GM12878 (cell line): ENCODE measurements at regions of chr19 and their contacts with region 1.

Region 1: GRCh38 chr19:8444645-8445487 is at the start of gene HNRNPM:
- DNase-seq: peak; percentile 91
- ATAC-seq: peak; percentile 94
- H3K4me3 ChIP-seq: peak within 1 kb of the TSS; percentile 85
- H3K27ac ChIP-seq: peak within 1 kb of the TSS; percentile 85
- H3K4me1 ChIP-seq: peaks cover 8% of the 10 kb centered on the region
- H3K27me3 ChIP-seq: no peaks in the 10 kb centered on the region
- CTCF ChIP-seq: no peak
- EP300 ChIP-seq: no peak
- POLR2A ChIP-seq: peak; percentile 98
- RAD21 ChIP-seq: no peak
- polyA plus RNA-seq, gene HNRNPM: 14.3 to 35.9 TPM

Region 2: GRCh38 chr19:8412783-8413628 is 31.9 kb before region 1 on chr19 and contains the start of gene MARCHF2:
- CTCF ChIA-PET with region 1: interaction called, 11 read pairs
- POLR2A ChIA-PET with region 1: interaction called, 14 read pairs
- RAD21 ChIA-PET with region 1: interaction called, 14 read pairs
- SMC1A ChIA-PET with region 1: no interaction called
- in situ Hi-C with region 1: no loop called
- intact Hi-C with region 1: no loop called
- DNase-seq: peak; percentile 73
- ATAC-seq: peak; percentile 100
- H3K4me3 ChIP-seq: peak within 1 kb of the TSS; percentile 77
- H3K27ac ChIP-seq: no peak within 1 kb of the TSS; the same call in 1 of the 2 replicates
- H3K4me1 ChIP-seq: peaks cover 4% of the 10 kb centered on the region; the same call in 1 of the 2 replicates
- H3K27me3 ChIP-seq: no peaks in the 10 kb centered on the region
- CTCF ChIP-seq: peak; percentile 40 to 70 (median 66)
- EP300 ChIP-seq: no peak
- POLR2A ChIP-seq: peak; percentile 66
- RAD21 ChIP-seq: peak; percentile 60
- polyA plus RNA-seq, gene MARCHF2: 1.6 to 2.8 TPM

Region 3: DNA sequence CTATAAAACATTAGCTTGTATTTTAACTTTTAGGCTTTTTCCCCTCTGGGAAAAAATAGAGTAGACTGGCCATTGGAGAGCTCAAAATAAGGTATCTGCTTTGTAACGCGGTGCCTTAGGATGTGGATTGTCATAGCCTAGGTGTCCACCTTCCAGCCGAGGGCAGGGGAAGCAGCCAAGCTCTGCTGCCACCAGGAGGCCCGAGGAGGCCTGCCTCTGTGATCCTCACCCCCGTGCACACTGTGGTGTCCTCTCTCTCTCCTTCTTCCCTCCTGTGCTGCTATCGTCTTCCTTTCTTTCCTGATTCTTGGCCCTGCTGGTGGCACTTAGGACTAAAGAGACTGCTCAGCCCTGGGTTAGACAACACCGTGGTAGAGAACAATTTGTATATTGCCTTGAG is 11.2 kb after region 1 on chr19:
- CTCF ChIA-PET with region 1: interaction called, 10 read pairs
- POLR2A ChIA-PET with region 1: interaction called, 10 read pairs
- RAD21 ChIA-PET with region 1: no interaction called
- SMC1A ChIA-PET with region 1: interaction called, 7 read pairs
- in situ Hi-C with region 1: no loop called
- intact Hi-C with region 1: no loop called
- DNase-seq: no peak
- ATAC-seq: 0 out of 3 replicates have a peak, but pooled peaks have one; percentile 20
- H3K4me3 ChIP-seq: no peak overlapping the region
- H3K27ac ChIP-seq: no peak overlapping the region
- H3K4me1 ChIP-seq: peaks cover 13% of the 10 kb centered on the region
- H3K27me3 ChIP-seq: no peaks in the 10 kb centered on the region
- CTCF ChIP-seq: no peak
- EP300 ChIP-seq: no peak
- POLR2A ChIP-seq: no peak; the same call in 1 of the 2 replicates
- RAD21 ChIP-seq: no peak

Region 4: DNA sequence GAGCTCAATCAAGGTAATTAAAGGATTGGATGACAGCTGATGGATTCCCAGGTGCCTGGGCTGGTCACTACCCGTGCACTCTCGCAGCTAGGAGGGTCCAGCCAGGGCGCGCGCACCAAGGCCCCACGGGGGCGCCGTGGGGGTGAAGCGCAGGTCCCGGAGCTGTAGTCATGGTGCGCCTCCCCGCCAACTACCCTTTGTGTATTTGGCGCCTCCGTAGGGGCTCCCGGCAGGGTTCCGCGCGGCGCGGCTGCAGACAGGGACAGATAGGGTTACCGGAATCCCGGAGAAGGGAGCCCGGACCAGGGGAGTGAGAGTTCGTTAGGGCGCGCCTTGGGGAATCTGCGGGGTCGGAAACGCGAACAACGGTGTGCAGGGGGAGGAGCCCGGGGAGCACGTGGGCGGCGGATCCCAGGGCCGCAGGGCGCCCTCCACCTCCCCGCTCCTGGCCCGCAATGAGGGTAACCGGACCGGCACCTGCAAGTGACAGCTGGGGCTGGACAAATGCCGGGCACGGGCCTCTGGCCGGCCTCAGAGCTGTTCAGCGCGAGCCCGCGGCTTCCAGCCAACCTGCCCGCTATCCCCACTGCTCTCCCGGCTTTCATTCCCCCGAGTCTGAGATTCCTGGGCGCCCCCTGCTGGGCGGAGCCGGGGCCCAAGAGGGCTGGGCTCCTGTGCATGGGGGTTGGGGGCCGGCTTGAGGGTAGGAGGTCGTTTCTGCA is 61.0 kb after region 1 on chr19:
- CTCF ChIA-PET with region 1: interaction called, 17 read pairs
- POLR2A ChIA-PET with region 1: interaction called, 3 read pairs
- RAD21 ChIA-PET with region 1: interaction called, 5 read pairs
- SMC1A ChIA-PET with region 1: interaction called, 3 read pairs
- in situ Hi-C with region 1: no loop called
- intact Hi-C with region 1: no loop called
- DNase-seq: no peak
- ATAC-seq: peak; percentile 83
- H3K4me3 ChIP-seq: peak overlapping the region; percentile 69
- H3K27ac ChIP-seq: peak overlapping the region; percentile 33; the same call in 1 of the 2 replicates
- H3K4me1 ChIP-seq: peaks cover 4% of the 10 kb centered on the region; the same call in 1 of the 2 replicates
- H3K27me3 ChIP-seq: no peaks in the 10 kb centered on the region
- CTCF ChIP-seq: peak; percentile 76 to 87 (median 77)
- EP300 ChIP-seq: no peak
- POLR2A ChIP-seq: peak; percentile 65
- RAD21 ChIP-seq: peak; percentile 71